ENCODE measurements at regions of chr6 and their contacts with region 1.

Region 1: GRCh38 chr6:38493931-38494547 is 145.7 kb downstream of the BTBD9 start:
- DNase-seq: peak; percentile 42
- H3K4me3 ChIP-seq: no peak overlapping the region
- H3K27ac ChIP-seq: no peak overlapping the region
- H3K4me1 ChIP-seq: no peaks in the 10 kb centered on the region
- H3K27me3 ChIP-seq: no peaks in the 10 kb centered on the region
- CTCF ChIP-seq: peak; percentile 72 to 82

Region 2: GRCh38 chr6:37538107-37538506 is 955.9 kb before region 1 on chr6:
- CTCF ChIA-PET with region 1: interaction called, 9 read pairs
- dilution Hi-C with region 1: no loop called
- in situ Hi-C with region 1: no loop called
- intact Hi-C with region 1: loop called (anchors 10 kb)
- DNase-seq: peak; percentile 35
- H3K4me3 ChIP-seq: no peak overlapping the region
- H3K27ac ChIP-seq: no peak overlapping the region
- H3K4me1 ChIP-seq: peaks cover 8% of the 10 kb centered on the region
- H3K27me3 ChIP-seq: peaks cover 4% of the 10 kb centered on the region
- CTCF ChIP-seq: peak; percentile 52 to 82

Region 3: GRCh38 chr6:37705239-37706051 is 788.6 kb before region 1 on chr6:
- CTCF ChIA-PET with region 1: no interaction called
- dilution Hi-C with region 1: no loop called
- in situ Hi-C with region 1: no loop called
- intact Hi-C with region 1: loop called (anchors 2 kb)
- DNase-seq: peak; percentile 17
- H3K4me3 ChIP-seq: peak overlapping the region; percentile 26 to 33 (median 29)
- H3K27ac ChIP-seq: no peak overlapping the region
- H3K4me1 ChIP-seq: peaks cover 4% of the 10 kb centered on the region
- H3K27me3 ChIP-seq: no peaks in the 10 kb centered on the region
- CTCF ChIP-seq: peak; percentile 26 to 66

Region 4: DNA sequence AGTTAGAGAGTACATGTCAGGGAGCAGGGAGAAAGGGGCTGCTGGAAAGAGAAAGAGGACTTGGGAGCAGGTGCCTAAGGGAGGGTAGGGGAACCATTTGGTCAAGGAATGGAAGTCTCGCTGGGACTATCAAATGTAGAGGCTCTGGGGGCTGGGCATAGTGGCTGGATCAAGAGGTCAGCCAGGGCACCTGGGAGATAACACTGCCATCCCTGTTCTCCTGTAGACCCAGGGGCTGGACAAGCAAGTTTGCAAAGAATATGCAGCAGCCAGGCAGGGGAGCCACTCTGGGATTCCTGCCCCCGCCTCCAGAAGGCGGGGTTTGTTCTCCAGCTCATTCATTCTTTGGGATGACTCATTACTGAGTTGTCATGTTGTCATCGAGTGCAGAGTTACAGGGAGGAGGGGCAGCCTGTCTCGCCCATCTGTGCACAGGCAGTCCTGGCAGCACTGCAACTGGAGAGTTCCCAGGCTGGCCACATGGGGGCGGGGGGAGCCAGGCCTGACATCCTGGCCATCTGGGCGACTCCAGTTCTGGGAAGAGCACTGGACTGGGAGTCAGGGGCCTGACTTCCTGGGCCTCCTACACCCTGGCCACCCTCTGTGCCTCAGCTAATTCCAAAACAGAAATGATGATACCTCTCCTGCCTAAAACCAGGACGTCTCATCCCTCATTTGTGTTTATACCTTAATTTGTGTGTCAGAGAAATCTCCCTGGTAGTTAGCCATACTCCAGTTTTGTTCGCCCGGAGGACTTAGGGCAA is 702.7 kb before region 1 on chr6:
- CTCF ChIA-PET with region 1: no interaction called
- dilution Hi-C with region 1: no loop called
- in situ Hi-C with region 1: no loop called
- intact Hi-C with region 1: loop called (anchors 1 kb)
- DNase-seq: peak; percentile 95
- H3K4me3 ChIP-seq: no peak overlapping the region
- H3K27ac ChIP-seq: no peak overlapping the region
- H3K4me1 ChIP-seq: peaks cover 23% of the 10 kb centered on the region
- H3K27me3 ChIP-seq: no peaks in the 10 kb centered on the region
- CTCF ChIP-seq: peak; percentile 92 to 98

Region 5: DNA sequence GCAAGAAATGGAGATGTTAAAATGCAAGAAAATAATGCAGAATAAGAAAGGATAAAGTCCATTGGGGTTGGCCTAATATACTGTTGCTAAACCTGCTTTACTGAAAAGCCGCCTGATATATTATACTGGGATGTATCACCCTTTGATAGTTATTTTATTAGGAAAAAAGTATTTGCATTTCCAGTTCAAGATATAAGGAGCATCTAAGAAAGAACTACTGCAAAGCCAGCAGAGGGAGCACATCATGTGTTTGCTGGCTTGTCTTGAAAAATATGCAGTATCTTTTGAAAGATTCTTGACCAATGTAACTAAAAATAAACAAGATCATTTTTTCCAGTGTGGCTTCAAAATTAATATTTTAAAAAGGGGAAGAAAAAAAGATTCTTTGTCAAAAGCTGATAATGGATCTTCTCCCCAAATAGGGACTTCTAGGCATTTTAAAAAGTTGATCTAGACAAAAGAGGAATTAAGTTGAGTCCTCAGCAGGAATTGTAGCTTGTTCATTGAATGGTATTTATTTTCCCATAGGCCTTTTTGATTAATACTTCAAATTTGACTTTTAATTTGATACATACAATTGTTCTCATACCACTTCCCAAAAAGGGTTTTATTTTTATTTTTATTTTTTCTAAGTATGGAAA is 459.6 kb before region 1 on chr6:
- CTCF ChIA-PET with region 1: no interaction called
- dilution Hi-C with region 1: no loop called
- in situ Hi-C with region 1: loop called in 1 of 2 experiments (anchors 25 kb)
- intact Hi-C with region 1: loop called (anchors 1 kb)
- DNase-seq: no peak
- H3K4me3 ChIP-seq: no peak overlapping the region
- H3K27ac ChIP-seq: no peak overlapping the region
- H3K4me1 ChIP-seq: peaks cover 4% of the 10 kb centered on the region
- H3K27me3 ChIP-seq: no peaks in the 10 kb centered on the region
- CTCF ChIP-seq: peak; percentile 53 to 63

Region 6: GRCh38 chr6:38179300-38179699 is 314.7 kb before region 1 on chr6:
- CTCF ChIA-PET with region 1: no interaction called
- dilution Hi-C with region 1: no loop called
- in situ Hi-C with region 1: no loop called
- intact Hi-C with region 1: loop called (anchors 5 kb)
- DNase-seq: no peak
- H3K4me3 ChIP-seq: no peak overlapping the region
- H3K27ac ChIP-seq: no peak overlapping the region
- H3K4me1 ChIP-seq: no peaks in the 10 kb centered on the region
- H3K27me3 ChIP-seq: no peaks in the 10 kb centered on the region
- CTCF ChIP-seq: no peak

Region 7: GRCh38 chr6:38570750-38571149 is 76.7 kb after region 1 on chr6:
- CTCF ChIA-PET with region 1: interaction called, 5 read pairs
- dilution Hi-C with region 1: no loop called
- in situ Hi-C with region 1: no loop called
- intact Hi-C with region 1: loop called (anchors 5 kb)
- DNase-seq: no peak
- H3K4me3 ChIP-seq: no peak overlapping the region
- H3K27ac ChIP-seq: no peak overlapping the region
- H3K4me1 ChIP-seq: no peaks in the 10 kb centered on the region
- H3K27me3 ChIP-seq: no peaks in the 10 kb centered on the region
- CTCF ChIP-seq: peak; percentile 21 to 32

Measured in mammary epithelial cell (primary cell).